ENCODE measurements at regions of chr10 and their contacts with region 1.

Region 1: DNA sequence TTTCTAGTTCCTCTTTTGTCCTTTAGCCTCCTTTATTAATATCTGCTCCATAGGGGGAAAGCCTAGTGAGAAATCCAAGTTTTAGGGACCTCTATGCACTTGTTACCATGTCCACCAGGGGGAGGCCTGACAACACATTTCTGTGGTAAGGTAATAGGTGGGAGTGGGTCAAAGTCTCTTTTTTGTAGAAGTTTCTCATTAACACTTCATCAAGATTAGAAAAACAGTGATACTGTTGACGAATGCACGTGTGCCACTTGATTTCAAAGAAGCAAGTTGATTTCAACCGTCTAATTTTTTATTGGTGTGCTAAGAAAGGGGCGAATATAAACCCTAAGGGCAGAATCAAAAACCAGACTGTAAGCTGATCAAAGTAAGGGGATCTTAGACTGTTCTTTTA is 30.6 kb downstream of the CISD1 start:
- DNase-seq: peak; percentile 78
- H3K4me3 Mint-ChIP-seq: no peak overlapping the region
- H3K27ac Mint-ChIP-seq: no peak overlapping the region
- H3K4me1 Mint-ChIP-seq: no peaks in the 10 kb centered on the region
- H3K27me3 Mint-ChIP-seq: peaks cover 5% of the 10 kb centered on the region

Region 2: GRCh38 chr10:58384999-58385783 is 85.6 kb after region 1 on chr10 and contains the start of gene TFAM:
- CTCF ChIA-PET with region 1: interaction called, 36 read pairs
- intact Hi-C with region 1: loop called (anchors 1 kb)
- DNase-seq: peak; percentile 98
- H3K4me3 Mint-ChIP-seq: peak within 1 kb of the TSS; percentile 100
- H3K27ac Mint-ChIP-seq: peak within 1 kb of the TSS; percentile 97
- H3K4me1 Mint-ChIP-seq: peaks cover 36% of the 10 kb centered on the region
- H3K27me3 Mint-ChIP-seq: no peaks in the 10 kb centered on the region
- total RNA-seq, gene TFAM: 87.7 to 91.8 TPM

Region 3: DNA sequence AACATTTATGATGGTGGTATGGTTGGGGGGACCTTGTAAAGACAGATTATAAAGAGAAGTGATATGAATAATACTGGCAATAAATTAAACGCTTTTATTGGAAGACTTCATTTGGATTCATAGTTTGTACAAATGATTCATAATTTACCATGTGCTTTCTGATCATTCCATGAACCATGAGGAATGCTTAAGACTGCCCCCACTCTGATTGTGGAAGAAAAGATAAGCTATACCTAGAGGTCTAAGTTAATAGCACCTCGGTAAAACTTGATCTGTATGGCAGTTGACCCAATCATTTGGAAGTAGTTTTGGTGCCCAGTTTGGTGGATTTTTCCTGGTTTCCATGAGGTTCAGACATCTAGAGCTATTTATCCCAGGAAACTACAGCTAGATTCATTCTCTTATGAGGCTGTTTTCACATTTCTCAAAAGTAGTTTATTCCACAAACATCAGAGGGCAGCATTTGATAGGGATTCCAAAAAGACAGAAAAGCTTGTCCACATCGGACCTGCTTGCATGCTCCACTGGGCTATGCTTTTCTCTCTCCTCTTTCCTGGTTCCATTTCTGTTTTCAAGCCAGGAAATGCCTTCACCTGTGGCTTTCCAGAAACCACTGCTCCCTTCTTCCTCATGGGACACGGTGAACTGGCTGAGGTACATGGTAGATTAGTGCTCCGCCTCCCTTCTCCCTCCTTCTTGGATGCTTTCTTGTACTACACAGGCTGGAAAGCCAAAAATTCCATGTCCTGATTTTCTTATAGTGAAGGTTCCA is 114.9 kb after region 1 on chr10:
- CTCF ChIA-PET with region 1: no interaction called
- intact Hi-C with region 1: no loop called
- DNase-seq: no peak
- H3K4me3 Mint-ChIP-seq: no peak overlapping the region
- H3K27ac Mint-ChIP-seq: no peak overlapping the region
- H3K4me1 Mint-ChIP-seq: no peaks in the 10 kb centered on the region
- H3K27me3 Mint-ChIP-seq: peaks cover 6% of the 10 kb centered on the region

Region 4: DNA sequence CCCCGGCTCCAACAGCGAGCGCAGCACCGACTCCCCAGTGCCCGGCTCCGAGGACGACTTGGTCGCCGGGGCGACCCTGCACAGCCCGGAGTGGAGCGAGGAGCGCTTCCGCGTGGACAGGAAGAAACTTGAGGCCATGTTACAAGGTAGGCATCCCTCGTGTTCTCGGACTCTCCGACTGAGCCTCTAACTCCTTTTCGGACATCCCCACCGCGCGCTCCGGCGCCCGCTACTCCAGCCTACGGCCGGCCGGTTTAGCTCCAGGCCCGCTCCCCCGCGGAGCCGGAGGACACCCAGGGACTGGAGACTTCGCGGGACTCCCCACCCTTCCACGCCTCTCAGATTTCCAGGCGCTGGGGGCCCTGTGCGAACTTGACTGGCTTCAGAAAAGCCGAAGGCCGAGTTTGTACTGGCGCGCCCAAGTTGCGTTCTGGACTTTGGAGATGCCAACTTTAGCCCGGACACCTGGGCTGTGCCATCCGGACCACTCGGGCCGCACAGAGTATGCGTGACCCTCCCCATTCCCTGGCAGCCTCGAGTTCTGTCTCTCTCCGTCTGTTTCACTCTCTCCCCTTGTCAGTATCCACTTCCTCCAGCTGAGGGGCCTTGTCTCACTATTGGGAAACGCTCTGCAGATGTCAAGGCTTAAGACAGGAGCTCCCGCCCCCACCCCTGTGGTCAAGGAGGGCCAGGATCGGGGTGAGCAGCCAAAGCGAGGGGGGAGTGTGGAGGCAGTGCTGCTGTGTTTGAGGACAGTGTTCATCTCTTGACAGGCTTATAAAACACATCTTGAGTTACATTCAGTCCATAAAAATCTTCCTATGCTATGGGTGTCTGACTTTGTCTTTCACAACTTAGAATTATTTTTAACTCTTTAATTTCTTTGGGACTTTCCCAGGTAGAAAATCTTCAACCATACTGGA is 213.9 kb after region 1 on chr10:
- CTCF ChIA-PET with region 1: no interaction called
- intact Hi-C with region 1: loop called (anchors 5 kb)
- DNase-seq: no peak
- H3K4me3 Mint-ChIP-seq: peak overlapping the region; percentile 55
- H3K27ac Mint-ChIP-seq: no peak overlapping the region
- H3K4me1 Mint-ChIP-seq: peaks cover 8% of the 10 kb centered on the region
- H3K27me3 Mint-ChIP-seq: peaks cover 38% of the 10 kb centered on the region

Region 5: DNA sequence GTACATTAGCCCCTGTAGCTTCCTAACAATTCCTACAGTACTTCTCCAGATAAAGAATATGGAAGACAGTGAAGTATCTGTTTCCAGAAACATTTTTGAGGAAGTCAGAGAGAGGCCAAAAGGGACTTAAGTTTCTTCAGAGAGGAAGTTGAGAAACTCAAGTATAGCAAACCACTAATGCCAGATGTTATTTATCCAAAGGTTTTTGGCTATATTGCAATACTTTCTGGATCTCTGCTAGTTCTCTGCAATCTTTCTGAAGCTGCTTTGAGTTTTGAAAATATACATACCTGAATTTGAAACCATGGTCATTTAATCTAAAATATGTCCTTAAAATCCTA is 277.8 kb after region 1 on chr10:
- CTCF ChIA-PET with region 1: no interaction called
- intact Hi-C with region 1: no loop called
- DNase-seq: no peak
- H3K4me3 Mint-ChIP-seq: no peak overlapping the region
- H3K27ac Mint-ChIP-seq: no peak overlapping the region
- H3K4me1 Mint-ChIP-seq: no peaks in the 10 kb centered on the region
- H3K27me3 Mint-ChIP-seq: no peaks in the 10 kb centered on the region

Region 6: DNA sequence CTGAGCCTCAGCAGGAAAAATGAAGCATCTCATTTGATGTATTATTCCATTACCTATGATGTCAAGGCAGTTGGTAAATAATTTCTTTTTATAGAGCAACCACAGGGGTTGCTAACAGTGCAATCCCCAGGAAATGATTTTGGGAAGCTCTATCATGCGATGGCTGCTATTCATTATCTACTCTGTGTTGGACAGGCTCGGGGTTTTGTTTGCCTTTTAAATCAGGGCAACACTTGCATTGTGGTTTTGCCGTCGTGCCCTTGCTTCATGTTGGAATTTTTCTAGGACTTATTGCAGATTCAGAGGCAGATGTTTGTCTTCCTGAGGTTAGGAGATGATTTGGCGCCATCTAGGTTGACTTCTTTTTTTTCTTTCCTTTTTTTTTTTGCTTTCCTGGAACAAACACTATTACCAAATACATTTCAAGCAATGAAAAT is 341.5 kb after region 1 on chr10:
- CTCF ChIA-PET with region 1: interaction called, 3 read pairs
- intact Hi-C with region 1: loop called (anchors 1 kb)
- DNase-seq: no peak
- H3K4me3 Mint-ChIP-seq: no peak overlapping the region
- H3K27ac Mint-ChIP-seq: no peak overlapping the region
- H3K4me1 Mint-ChIP-seq: no peaks in the 10 kb centered on the region
- H3K27me3 Mint-ChIP-seq: peaks cover 8% of the 10 kb centered on the region